Naive thymus-derived CD4-positive, alpha-beta T cell (primary cell): ENCODE measurements at regions of chr1 and their contacts with region 1.

Region 1: GRCh38 chr1:222728746-222729145 is 8.3 kb upstream of the FAM177B start:
- DNase-seq: no peak
- ATAC-seq: no peak
- H3K4me3 ChIP-seq: no peak overlapping the region
- H3K4me3 Mint-ChIP-seq: no peak overlapping the region
- H3K27ac ChIP-seq: no peak overlapping the region
- H3K27ac Mint-ChIP-seq: peak overlapping the region in 2 of 9 donors; percentile 19 to 23
- H3K4me1 ChIP-seq: no peaks in the 10 kb centered on the region
- H3K4me1 Mint-ChIP-seq: peaks cover 0 to 22% (median 4%) of the 10 kb centered on the region in 7 donors
- H3K27me3 ChIP-seq: no peaks in the 10 kb centered on the region
- H3K27me3 Mint-ChIP-seq: no peaks in the 10 kb centered on the region

Region 2: DNA sequence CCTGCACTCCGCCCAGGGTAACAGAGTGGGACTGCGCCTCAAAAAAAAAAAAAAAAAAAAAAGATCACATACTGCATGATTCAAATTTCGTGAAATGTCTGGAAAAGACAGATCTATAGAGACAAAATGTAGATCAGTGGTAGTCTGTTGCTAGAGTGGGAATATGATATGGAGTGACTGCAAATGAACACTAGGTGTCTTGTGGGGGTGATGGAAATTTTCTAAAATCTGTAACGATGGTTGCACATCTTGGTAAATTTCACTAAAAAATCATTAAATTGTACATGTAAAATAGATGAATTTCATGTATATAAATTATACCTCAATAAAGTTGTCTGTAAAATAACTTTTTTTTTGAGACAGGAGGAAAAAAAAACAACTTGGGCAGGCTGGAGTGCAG is 21.9 kb before region 1 on chr1:
- CTCF ChIA-PET with region 1: no interaction called
- POLR2A ChIA-PET with region 1: no interaction called
- intact Hi-C with region 1: loop called in 1 of 2 experiments (anchors 1 kb)
- DNase-seq: no peak
- ATAC-seq: peak; percentile 19
- H3K4me3 ChIP-seq: no peak overlapping the region
- H3K4me3 Mint-ChIP-seq: peak overlapping the region in 2 of 10 donors; percentile 21 to 37
- H3K27ac ChIP-seq: no peak overlapping the region
- H3K27ac Mint-ChIP-seq: no peak overlapping the region
- H3K4me1 ChIP-seq: peaks cover 11 to 25% of the 10 kb centered on the region in 2 donors
- H3K4me1 Mint-ChIP-seq: peaks cover 50 to 84% (median 71%) of the 10 kb centered on the region in 7 donors
- H3K27me3 ChIP-seq: no peaks in the 10 kb centered on the region
- H3K27me3 Mint-ChIP-seq: no peaks in the 10 kb centered on the region